ENCODE measurements at regions of chr20 and their contacts with region 1.

Region 1: GRCh38 chr20:31894980-31895675 is 24.7 kb downstream of the TTLL9 start:
- DNase-seq: peak; percentile 75

Region 2: DNA sequence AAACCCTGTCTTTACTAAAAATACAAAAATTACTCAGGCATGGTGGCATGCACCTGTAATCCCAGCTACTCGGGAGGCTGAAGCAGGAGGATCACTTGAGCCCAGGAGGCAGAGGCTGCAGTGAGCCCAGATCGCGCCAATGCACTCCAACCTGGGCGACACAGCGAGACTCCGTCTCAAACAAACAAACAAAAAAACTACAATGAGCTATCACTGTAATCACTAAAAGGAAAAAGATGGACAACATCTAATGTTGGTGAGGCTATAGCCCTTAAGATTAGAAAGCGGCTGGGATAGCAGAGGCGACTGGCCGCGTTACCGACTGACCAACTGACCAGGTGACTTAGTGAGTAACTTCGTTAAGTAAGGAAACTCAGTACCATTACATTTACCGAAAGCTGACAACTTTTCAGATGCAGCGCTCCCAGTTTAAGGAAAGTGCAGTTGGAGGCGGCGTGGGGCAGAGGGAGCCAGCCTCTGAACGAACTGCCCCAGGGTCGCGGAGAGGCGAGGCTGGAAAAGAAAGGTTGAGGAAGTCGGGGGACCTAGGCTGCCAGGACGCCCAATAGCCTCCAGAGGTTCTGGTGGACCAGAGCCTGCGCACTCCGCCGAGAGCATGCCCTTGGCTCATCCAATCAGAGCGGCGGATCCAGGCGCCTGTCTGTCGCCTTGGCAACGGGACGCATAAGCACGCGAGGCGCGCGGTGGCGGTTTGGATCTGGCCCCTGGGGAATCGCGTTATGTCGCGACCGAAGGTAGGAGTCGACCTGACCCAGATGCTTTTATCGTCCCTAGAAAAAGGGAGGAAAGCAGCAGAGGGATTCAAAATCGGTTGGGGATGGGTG is 15.8 kb before region 1 on chr20:
- CTCF ChIA-PET with region 1: no interaction called
- POLR2A ChIA-PET with region 1: interaction called, 20 read pairs
- DNase-seq: peak; percentile 93